ENCODE measurements at regions of chr1 and their contacts with region 1.

Region 1: DNA sequence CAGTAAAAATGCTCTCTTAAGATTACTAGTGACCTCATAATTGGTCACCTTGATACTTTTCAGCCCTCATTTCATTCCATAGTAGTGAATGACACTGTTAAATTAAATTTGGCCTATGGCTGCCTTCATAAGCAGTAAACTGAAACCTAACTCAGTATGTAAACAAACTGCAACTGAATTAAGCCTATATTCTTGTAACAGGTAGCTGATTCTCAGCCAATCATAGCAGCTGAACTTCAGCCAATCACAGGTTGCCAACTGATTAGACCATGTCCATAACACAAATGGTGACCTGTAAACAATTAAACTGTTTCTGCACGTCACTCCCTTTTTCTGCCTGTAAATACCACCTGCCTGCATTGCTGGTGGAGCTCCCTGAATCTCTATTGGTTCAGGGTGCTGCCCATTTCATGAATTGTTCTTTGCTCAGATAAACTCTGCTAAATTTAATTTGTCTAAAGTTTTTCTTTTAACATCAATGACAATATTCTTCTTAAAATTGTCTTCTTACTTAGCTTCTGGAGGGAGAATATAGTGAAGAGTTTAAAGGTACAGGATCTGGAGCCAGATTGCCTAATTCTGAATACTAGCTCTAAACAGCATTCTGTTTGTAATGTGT is 24.0 kb upstream of the CAMSAP2 start:
- DNase-seq: peak; percentile 8
- H3K4me3 ChIP-seq: no peak overlapping the region
- H3K27ac ChIP-seq: no peak overlapping the region
- H3K4me1 ChIP-seq: no peaks in the 10 kb centered on the region
- H3K27me3 ChIP-seq: no peaks in the 10 kb centered on the region
- CTCF ChIP-seq: no peak

Region 2: GRCh38 chr1:200674838-200675587 is 39.7 kb before region 1 on chr1:
- CTCF ChIA-PET with region 1: no interaction called
- dilution Hi-C with region 1: loop called (anchors 5 kb)
- in situ Hi-C with region 1: no loop called
- intact Hi-C with region 1: no loop called
- DNase-seq: no peak
- H3K4me3 ChIP-seq: peak overlapping the region in 1 of 3 experiments; percentile 2
- H3K27ac ChIP-seq: peak overlapping the region; percentile 95
- H3K4me1 ChIP-seq: peaks cover 39% of the 10 kb centered on the region
- H3K27me3 ChIP-seq: no peaks in the 10 kb centered on the region
- CTCF ChIP-seq: no peak

Region 3: DNA sequence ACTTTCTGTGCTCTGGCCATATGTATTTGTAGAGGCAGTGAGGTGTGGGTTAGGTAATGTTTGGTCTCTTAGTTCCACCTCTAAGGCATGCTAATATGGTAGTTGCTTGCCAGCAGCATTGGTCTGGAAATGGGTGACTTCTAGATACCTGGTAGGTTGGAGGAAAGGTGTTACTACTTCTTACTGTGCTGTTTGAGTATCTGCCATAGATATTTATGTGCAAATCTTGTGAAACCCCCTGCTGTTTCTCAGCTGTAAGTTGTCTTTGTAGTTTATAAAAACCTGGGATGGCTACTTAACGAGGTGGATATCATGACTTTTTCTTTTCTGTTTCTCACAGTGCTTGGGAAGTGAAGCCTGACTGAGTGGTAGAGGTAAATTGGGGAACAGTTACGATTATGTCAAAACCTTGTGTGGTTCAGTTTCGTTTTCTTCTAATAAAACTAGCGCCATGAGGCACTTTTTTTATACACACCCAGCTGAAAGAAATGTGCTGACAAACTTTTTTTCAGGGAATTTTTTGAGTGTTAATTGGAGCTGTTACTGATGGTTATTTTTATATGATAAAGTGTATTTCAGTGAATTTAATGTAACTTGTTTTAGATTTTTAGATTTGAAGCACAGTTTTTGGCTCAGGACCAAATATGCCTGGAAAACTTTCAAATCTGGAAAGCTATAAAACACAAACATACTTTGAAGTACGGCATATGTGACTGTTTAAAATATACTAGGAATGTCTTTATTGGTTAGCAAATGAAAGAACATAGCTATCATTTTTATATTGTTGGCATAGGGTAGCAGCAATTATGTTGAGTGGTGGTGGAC is 66.1 kb after region 1 on chr1:
- CTCF ChIA-PET with region 1: no interaction called
- dilution Hi-C with region 1: no loop called
- in situ Hi-C with region 1: no loop called
- intact Hi-C with region 1: no loop called
- DNase-seq: no peak
- H3K4me3 ChIP-seq: no peak overlapping the region
- H3K27ac ChIP-seq: no peak overlapping the region
- H3K4me1 ChIP-seq: no peaks in the 10 kb centered on the region
- H3K27me3 ChIP-seq: no peaks in the 10 kb centered on the region
- CTCF ChIP-seq: no peak

Measured in mammary epithelial cell (primary cell).